ENCODE measurements at regions of chr11 and their contacts with region 1.

Region 1: GRCh38 chr11:1050581-1051355 is 14.2 kb upstream of the MUC6 start:
- DNase-seq: peak; percentile 68 to 96 (median 90)
- ATAC-seq: peak; percentile 95 to 99 (median 96)
- H3K4me3 ChIP-seq: no peak overlapping the region
- H3K27ac ChIP-seq: no peak overlapping the region
- H3K4me1 ChIP-seq: peaks cover 0 to 12% (median 5%) of the 10 kb centered on the region in 3 donors
- H3K27me3 ChIP-seq: no peaks in the 10 kb centered on the region
- CTCF ChIP-seq: peak; percentile 86 to 95 (median 90)

Region 2: GRCh38 chr11:834371-835316 is 216.1 kb before region 1 on chr11:
- intact Hi-C with region 1: no loop called
- DNase-seq: peak; percentile 86 to 97 (median 92)
- ATAC-seq: peak; percentile 62 to 75 (median 70)
- H3K4me3 ChIP-seq: peak overlapping the region in 3 of 4 donors; percentile 82 to 86 (median 83)
- H3K27ac ChIP-seq: peak overlapping the region; percentile 85 to 95 (median 88)
- H3K4me1 ChIP-seq: peaks cover 0 to 11% (median 9%) of the 10 kb centered on the region in 3 donors
- H3K27me3 ChIP-seq: no peaks in the 10 kb centered on the region
- CTCF ChIP-seq: no peak

Region 3: GRCh38 chr11:848380-848931 is 202.3 kb before region 1 on chr11:
- intact Hi-C with region 1: loop called in 2 of 3 experiments (anchors 2 to 5 kb)
- DNase-seq: peak in 3 of 6 donors; percentile 61 to 83 (median 73)
- ATAC-seq: peak; percentile 19 to 56 (median 54)
- H3K4me3 ChIP-seq: no peak overlapping the region
- H3K27ac ChIP-seq: no peak overlapping the region
- H3K4me1 ChIP-seq: peaks cover 4 to 26% (median 25%) of the 10 kb centered on the region in 3 donors
- H3K27me3 ChIP-seq: no peaks in the 10 kb centered on the region
- CTCF ChIP-seq: peak; percentile 86 to 95 (median 92)

Region 4: GRCh38 chr11:925496-926321 is 125.1 kb before region 1 on chr11 and contains the start of gene AP2A2:
- intact Hi-C with region 1: loop called in 1 of 3 experiments (anchors 10 kb)
- DNase-seq: peak; percentile 83 to 98 (median 92)
- ATAC-seq: peak; percentile 92 to 97 (median 94)
- H3K4me3 ChIP-seq: peak within 1 kb of the TSS; percentile 49 to 75 (median 60)
- H3K27ac ChIP-seq: peak within 1 kb of the TSS; percentile 35 to 81 (median 68)
- H3K4me1 ChIP-seq: peaks cover 0 to 22% (median 8%) of the 10 kb centered on the region in 3 donors
- H3K27me3 ChIP-seq: no peaks in the 10 kb centered on the region
- CTCF ChIP-seq: peak; percentile 57 to 76 (median 66)
- total RNA-seq, gene AP2A2: 40.0 to 60.2 (median 53.2) TPM

Measured in pancreas (tissue), 10 donors.